Activated CD8-positive, alpha-beta T cell treated with anti-CD3 and anti-CD28 coated beads for 36 hours (primary cell): ENCODE measurements at regions of chr2 and their contacts with region 1.

Region 1: GRCh38 chr2:224778474-224778877 is 62.3 kb upstream of the CCDC195 start:
- DNase-seq: peak; percentile 77
- ATAC-seq: peak; percentile 71
- H3K4me3 Mint-ChIP-seq: no peak overlapping the region
- H3K27ac Mint-ChIP-seq: peak overlapping the region; percentile 16
- H3K4me1 Mint-ChIP-seq: peaks cover 6% of the 10 kb centered on the region
- H3K27me3 Mint-ChIP-seq: no peaks in the 10 kb centered on the region
- CTCF ChIP-seq: peak; percentile 76

Region 2: DNA sequence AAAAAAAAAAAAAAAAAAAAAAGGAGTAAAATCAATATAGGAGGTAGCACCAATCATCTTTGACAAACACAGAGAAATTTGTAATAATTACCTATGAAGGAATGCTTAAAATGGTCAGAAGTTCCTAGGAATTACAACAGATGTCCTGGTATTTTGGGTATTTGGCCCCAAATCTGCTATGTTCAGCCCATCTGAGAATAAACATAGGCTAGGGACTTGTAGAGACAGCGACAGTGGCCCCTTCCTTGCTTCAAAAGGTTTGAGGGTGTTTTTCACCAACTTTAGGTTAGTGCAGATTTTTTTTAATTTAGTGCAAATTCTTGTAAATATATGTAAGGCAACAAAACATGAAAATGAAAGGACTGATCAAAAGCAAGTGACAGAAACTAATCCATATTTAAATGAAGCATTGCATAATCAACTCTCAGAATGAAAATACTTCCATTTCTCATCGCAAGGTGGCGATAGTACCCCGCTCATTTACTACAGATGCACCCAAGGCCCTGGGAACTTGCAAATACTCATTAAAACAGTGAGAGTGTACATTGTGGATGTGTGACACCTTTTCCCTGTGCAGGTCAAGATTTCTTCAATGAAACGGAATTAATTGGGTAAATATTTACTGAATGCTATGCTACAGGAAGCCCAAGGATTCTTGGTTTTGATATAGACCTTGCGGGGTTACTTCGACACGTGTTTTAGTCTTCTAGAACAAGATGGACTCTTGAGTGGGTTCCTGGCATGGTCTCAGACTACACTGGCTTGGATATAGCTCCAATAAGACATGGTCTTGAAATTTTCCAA is 421.2 kb before region 1 on chr2:
- CTCF ChIA-PET with region 1: interaction called, 5 read pairs
- POLR2A ChIA-PET with region 1: no interaction called
- intact Hi-C with region 1: loop called (anchors 10 kb)
- DNase-seq: peak; percentile 61
- ATAC-seq: peak; percentile 65
- H3K4me3 Mint-ChIP-seq: no peak overlapping the region
- H3K27ac Mint-ChIP-seq: no peak overlapping the region
- H3K4me1 Mint-ChIP-seq: no peaks in the 10 kb centered on the region
- H3K27me3 Mint-ChIP-seq: peaks cover 2% of the 10 kb centered on the region
- CTCF ChIP-seq: peak; percentile 82

Region 3: GRCh38 chr2:224670203-224670602 is 108.3 kb before region 1 on chr2:
- CTCF ChIA-PET with region 1: no interaction called
- POLR2A ChIA-PET with region 1: no interaction called
- intact Hi-C with region 1: no loop called
- DNase-seq: no peak
- ATAC-seq: no peak
- H3K4me3 Mint-ChIP-seq: no peak overlapping the region
- H3K27ac Mint-ChIP-seq: no peak overlapping the region
- H3K4me1 Mint-ChIP-seq: no peaks in the 10 kb centered on the region
- H3K27me3 Mint-ChIP-seq: no peaks in the 10 kb centered on the region
- CTCF ChIP-seq: no peak

Region 4: DNA sequence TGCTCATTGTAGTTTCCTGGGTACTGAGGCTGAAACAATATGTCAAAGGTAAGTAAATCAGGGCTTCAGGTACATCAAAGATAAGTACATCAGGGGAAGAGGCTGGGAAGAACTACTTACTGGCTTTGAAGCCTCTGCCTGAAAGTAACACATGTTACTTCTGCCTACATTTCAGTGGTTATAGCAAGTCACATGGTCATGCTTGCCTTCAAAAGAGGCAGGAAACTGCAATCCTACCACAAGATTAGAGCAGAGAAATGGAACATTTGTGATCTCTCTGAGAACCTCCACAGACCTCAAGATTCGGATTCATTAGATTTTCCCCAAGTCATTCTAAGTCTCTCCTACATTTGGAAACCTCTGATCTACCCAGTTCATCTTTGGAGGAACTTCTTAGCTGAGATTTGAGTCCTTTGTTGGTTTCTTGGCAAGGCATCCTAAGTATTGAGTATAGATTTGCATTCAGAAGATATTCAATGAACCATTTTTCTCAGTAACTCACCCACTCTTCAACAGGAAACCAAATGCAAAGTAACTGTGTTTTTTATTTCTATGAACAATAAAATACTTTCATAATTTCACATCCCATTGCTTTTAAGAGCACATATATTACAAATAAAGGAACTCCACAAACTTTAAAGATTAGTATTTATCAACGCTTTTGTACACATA is 13.8 kb before region 1 on chr2:
- CTCF ChIA-PET with region 1: interaction called, 14 read pairs
- POLR2A ChIA-PET with region 1: no interaction called
- intact Hi-C with region 1: no loop called
- DNase-seq: no peak
- ATAC-seq: peak; percentile 78
- H3K4me3 Mint-ChIP-seq: no peak overlapping the region
- H3K27ac Mint-ChIP-seq: peak overlapping the region; percentile 77
- H3K4me1 Mint-ChIP-seq: peaks cover 32% of the 10 kb centered on the region
- H3K27me3 Mint-ChIP-seq: no peaks in the 10 kb centered on the region
- CTCF ChIP-seq: no peak

Region 5: GRCh38 chr2:224793946-224794345 is 15.5 kb after region 1 on chr2:
- CTCF ChIA-PET with region 1: interaction called, 18 read pairs
- POLR2A ChIA-PET with region 1: no interaction called
- intact Hi-C with region 1: no loop called
- DNase-seq: no peak
- ATAC-seq: no peak
- H3K4me3 Mint-ChIP-seq: no peak overlapping the region
- H3K27ac Mint-ChIP-seq: peak overlapping the region; percentile 45
- H3K4me1 Mint-ChIP-seq: no peaks in the 10 kb centered on the region
- H3K27me3 Mint-ChIP-seq: no peaks in the 10 kb centered on the region
- CTCF ChIP-seq: no peak